IMR-90 (cell line): ENCODE measurements at regions of chr20 and their contacts with region 1.

Region 1: GRCh38 chr20:25987073-25987927 is 290.6 kb upstream of the ZNF337 start:
- DNase-seq: peak; percentile 10
- ATAC-seq: peak; percentile 50
- H3K4me3 ChIP-seq: no peak overlapping the region
- H3K27ac ChIP-seq: no peak overlapping the region
- H3K4me1 ChIP-seq: no peaks in the 10 kb centered on the region
- H3K27me3 ChIP-seq: peaks cover 5% of the 10 kb centered on the region; the same call in 1 of the 2 replicates
- CTCF ChIP-seq: no peak
- POLR2A ChIP-seq: no peak
- RAD21 ChIP-seq: no peak

Region 2: GRCh38 chr20:24918579-24919566 is 1068.4 kb before region 1 on chr20:
- CTCF ChIA-PET with region 1: no interaction called
- POLR2A ChIA-PET with region 1: no interaction called
- dilution Hi-C with region 1: no loop called
- in situ Hi-C with region 1: no loop called
- intact Hi-C with region 1: no loop called
- DNase-seq: no peak
- ATAC-seq: no peak
- H3K4me3 ChIP-seq: no peak overlapping the region
- H3K27ac ChIP-seq: no peak overlapping the region
- H3K4me1 ChIP-seq: no peaks in the 10 kb centered on the region
- H3K27me3 ChIP-seq: peaks cover 20% of the 10 kb centered on the region; the same call in 1 of the 2 replicates
- CTCF ChIP-seq: no peak
- POLR2A ChIP-seq: no peak
- RAD21 ChIP-seq: no peak

Region 3: DNA sequence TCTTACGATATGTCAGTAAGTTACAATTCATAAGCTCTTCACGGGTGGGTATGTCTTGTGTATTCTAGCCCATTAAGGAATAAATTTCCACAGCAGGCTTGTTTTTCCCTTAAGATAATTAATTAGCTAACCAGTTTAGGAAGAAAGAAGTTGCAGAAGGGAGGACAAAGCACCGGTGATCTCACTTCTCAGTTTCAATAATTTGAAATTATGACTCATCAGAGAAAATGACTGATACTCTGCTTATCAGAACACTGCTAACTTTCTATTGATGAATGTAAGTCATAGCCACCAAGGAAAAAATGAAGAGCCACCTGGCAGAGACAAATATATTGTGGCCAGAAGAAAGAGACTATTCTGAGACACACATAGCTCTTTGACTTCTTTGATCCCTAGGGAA is 826.8 kb before region 1 on chr20:
- CTCF ChIA-PET with region 1: no interaction called
- POLR2A ChIA-PET with region 1: no interaction called
- dilution Hi-C with region 1: no loop called
- in situ Hi-C with region 1: loop called (anchors 25 kb)
- intact Hi-C with region 1: no loop called
- DNase-seq: no peak
- ATAC-seq: no peak
- H3K4me3 ChIP-seq: no peak overlapping the region
- H3K27ac ChIP-seq: no peak overlapping the region
- H3K4me1 ChIP-seq: no peaks in the 10 kb centered on the region
- H3K27me3 ChIP-seq: peaks cover 6% of the 10 kb centered on the region
- CTCF ChIP-seq: no peak
- POLR2A ChIP-seq: no peak
- RAD21 ChIP-seq: no peak

Region 4: DNA sequence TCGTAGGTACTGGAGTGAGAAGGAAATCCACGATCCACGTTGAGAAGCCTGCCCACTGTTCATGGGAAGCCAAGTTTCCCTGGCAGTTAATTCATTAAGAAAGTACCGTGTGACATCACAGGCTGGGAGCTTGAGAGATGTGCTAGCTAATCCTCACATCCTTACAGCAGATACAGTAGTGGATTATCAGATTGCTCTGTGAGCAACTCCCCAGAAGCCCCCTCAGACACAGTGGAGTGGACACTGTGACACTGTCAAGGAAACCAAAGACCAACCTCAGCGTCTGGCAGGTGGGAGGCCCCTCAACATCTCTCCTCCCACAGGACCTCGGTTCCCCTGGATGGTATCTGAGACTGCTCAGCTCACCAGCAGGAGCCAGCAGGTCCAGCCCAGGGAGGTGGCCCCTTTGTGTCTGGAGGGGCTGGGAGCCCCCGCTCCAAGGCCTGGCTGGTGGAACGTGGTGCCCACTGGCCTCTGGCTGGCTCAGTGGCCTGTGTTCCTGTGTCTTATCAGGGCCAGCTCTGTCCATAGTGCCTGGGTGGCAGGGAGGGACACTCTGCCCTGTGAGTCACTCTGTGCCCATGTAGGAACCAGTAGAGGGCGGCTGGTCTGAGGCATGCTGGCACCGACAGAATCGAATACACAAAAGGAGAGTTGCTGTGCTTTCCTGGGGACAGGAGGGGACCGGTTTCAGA is 732.2 kb before region 1 on chr20:
- CTCF ChIA-PET with region 1: no interaction called
- POLR2A ChIA-PET with region 1: no interaction called
- dilution Hi-C with region 1: no loop called
- in situ Hi-C with region 1: loop called (anchors 25 kb)
- intact Hi-C with region 1: no loop called
- DNase-seq: no peak
- ATAC-seq: no peak; the same call in 1 of the 2 replicates
- H3K4me3 ChIP-seq: no peak overlapping the region
- H3K27ac ChIP-seq: no peak overlapping the region
- H3K4me1 ChIP-seq: peaks cover 10% of the 10 kb centered on the region
- H3K27me3 ChIP-seq: no peaks in the 10 kb centered on the region
- CTCF ChIP-seq: no peak
- POLR2A ChIP-seq: no peak
- RAD21 ChIP-seq: no peak

Region 5: DNA sequence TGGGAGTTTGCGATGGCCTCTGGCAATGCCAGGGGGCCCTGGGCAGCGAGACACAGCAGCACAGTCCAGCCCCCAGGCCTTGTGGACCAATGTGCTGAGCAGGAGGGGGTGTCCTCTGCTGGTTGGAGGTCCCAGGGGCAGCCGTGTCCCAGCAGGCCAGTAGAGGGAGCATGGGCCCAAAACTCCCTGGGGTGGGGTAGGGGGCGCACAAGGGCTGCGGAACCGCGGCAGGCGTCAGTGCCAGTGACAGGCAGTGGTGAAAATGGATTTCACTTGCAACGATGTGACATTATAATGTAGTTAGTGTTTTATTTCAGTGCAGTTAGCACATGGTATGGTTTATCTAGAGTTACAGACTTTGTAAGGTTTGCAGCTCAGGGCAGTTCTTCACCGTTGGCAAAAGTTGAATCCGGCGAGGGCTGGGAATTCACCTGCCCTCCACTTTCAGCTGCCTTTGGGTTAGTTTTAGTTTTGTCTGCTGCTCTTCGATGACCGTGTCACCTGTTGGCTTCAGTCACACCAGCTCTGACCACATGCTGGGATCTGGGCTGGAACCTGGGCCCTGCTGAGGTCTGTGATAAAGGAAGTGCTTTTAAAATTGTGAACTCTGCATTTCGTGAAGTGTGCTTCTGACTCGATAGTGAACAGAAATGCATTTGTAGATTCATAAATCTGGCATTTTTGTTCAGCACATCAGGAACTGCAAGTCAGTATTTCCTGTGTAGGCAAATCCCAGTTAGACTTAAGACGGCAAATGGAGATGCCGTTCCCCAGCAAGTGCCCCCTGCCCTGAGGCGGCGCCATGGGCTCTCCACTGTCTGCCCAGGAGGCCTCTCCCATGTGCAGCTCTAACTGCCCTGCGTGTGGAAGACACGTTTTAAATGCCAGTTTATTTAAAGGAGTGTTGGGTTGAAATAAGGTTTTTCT is 692.6 kb before region 1 on chr20:
- CTCF ChIA-PET with region 1: no interaction called
- POLR2A ChIA-PET with region 1: no interaction called
- dilution Hi-C with region 1: no loop called
- in situ Hi-C with region 1: no loop called
- intact Hi-C with region 1: no loop called
- DNase-seq: peak; percentile 52
- ATAC-seq: peak; percentile 81
- H3K4me3 ChIP-seq: no peak overlapping the region
- H3K27ac ChIP-seq: no peak overlapping the region
- H3K4me1 ChIP-seq: peaks cover 7% of the 10 kb centered on the region
- H3K27me3 ChIP-seq: no peaks in the 10 kb centered on the region
- CTCF ChIP-seq: peak; percentile 99
- POLR2A ChIP-seq: no peak
- RAD21 ChIP-seq: peak; percentile 85

Region 6: DNA sequence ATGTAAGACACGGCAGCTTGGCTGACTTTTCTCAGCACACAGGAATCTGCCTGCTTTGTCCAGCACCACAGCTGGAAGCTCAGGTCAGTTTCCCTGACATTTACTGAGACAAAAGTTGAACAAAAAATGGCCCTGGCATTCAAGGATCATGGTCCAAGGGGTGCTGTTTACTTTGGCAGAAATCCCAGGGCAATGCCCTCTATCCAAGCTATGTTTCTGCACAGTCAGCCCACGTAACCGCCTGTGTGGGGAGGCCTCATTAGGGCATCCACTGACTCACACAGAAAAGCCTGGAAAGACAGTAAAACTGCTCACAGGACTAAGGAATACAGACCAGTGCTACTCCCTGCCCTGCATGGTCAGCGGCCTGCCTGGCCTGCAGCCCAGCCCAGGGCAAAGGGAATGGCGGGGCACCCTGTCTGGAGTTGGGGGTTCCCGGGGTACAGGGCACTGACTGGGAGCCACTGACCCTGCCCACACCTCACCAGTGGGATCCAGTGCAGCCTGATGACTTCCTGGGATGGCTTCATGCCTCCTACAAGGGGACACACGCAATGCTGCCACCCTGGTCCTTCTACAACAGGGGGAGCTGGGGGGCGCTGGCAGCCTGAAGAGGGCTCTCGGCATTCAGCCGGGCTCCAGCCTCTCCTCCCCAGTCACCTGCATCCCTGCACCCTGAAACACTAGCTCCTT is 479.1 kb before region 1 on chr20:
- CTCF ChIA-PET with region 1: no interaction called
- POLR2A ChIA-PET with region 1: no interaction called
- dilution Hi-C with region 1: no loop called
- in situ Hi-C with region 1: loop called (anchors 25 kb)
- intact Hi-C with region 1: no loop called
- DNase-seq: peak; percentile 85
- ATAC-seq: peak; percentile 97
- H3K4me3 ChIP-seq: no peak overlapping the region
- H3K27ac ChIP-seq: peak overlapping the region; percentile 49
- H3K4me1 ChIP-seq: peaks cover 10% of the 10 kb centered on the region
- H3K27me3 ChIP-seq: no peaks in the 10 kb centered on the region
- CTCF ChIP-seq: no peak
- POLR2A ChIP-seq: no peak
- RAD21 ChIP-seq: no peak

Region 7: GRCh38 chr20:25592135-25592852 is 395.0 kb before region 1 on chr20:
- CTCF ChIA-PET with region 1: no interaction called
- POLR2A ChIA-PET with region 1: no interaction called
- dilution Hi-C with region 1: no loop called
- in situ Hi-C with region 1: no loop called
- intact Hi-C with region 1: no loop called
- DNase-seq: peak; percentile 39
- ATAC-seq: peak; percentile 58
- H3K4me3 ChIP-seq: no peak overlapping the region
- H3K27ac ChIP-seq: peak overlapping the region; percentile 28; the same call in 1 of the 2 replicates
- H3K4me1 ChIP-seq: peaks cover 6% of the 10 kb centered on the region; the same call in 1 of the 2 replicates
- H3K27me3 ChIP-seq: no peaks in the 10 kb centered on the region
- CTCF ChIP-seq: no peak
- POLR2A ChIP-seq: no peak
- RAD21 ChIP-seq: no peak

Region 8: DNA sequence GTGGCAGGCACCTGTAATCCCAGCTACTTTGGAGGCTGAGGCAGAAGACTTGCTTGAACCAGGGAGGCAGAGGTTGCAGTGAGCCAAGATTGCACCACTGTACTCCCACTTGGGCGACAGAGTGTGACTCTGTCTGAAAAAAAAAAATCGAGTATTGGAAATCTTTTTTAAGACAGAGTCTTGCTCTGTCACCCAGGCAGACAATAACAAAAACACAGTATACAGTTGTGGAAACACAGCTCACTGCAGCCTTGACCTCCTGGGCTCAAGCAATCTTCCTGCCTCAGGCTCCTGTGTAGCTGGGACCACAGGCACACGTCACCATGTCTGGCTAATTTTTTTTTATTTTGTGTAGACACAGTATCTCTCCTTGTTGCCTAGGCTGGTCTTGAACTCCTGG is 378.5 kb before region 1 on chr20:
- CTCF ChIA-PET with region 1: no interaction called
- POLR2A ChIA-PET with region 1: no interaction called
- dilution Hi-C with region 1: no loop called
- in situ Hi-C with region 1: no loop called
- intact Hi-C with region 1: no loop called
- DNase-seq: no peak
- ATAC-seq: no peak
- H3K4me3 ChIP-seq: no peak overlapping the region
- H3K27ac ChIP-seq: no peak overlapping the region
- H3K4me1 ChIP-seq: no peaks in the 10 kb centered on the region
- H3K27me3 ChIP-seq: no peaks in the 10 kb centered on the region
- CTCF ChIP-seq: no peak
- POLR2A ChIP-seq: no peak
- RAD21 ChIP-seq: no peak

Region 9: DNA sequence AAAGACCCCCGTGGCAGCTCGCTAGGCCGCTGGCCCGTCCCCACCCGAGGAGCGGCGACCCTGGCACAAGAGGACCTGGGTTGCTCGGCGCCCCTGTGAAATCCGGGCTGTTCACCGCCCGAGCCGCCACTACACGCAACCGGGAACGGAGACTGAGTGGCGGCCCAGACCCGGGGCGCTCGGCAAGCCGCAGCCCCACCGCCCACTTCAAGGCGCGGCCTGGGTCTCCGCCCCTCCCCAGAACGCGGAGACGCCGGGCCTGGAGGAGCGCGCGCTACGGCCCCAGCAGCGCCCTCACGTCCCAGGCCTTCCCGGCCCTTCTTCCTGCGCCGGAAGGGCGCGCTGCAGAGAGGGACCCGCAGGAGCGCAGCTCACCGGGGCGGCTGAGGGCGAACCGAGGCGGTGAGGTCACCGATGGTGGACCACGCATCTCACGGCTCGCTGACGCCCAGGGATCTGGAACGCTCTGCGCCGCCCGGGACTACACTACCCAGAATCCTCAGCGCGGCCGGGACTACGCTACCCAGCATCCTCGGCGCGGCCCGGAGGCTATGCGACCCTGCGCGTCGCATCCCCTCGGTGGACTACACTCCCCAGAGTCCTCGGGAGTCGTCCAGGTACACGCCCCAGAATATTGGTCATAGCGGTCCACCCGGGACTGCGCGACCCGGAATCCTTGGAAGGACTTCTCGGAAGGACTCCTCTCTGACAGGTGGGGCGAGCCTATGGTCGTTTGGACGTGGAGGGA is 290.7 kb before region 1 on chr20 and contains the start of gene ZNF337:
- CTCF ChIA-PET with region 1: no interaction called
- POLR2A ChIA-PET with region 1: no interaction called
- dilution Hi-C with region 1: no loop called
- in situ Hi-C with region 1: loop called (anchors 25 kb)
- intact Hi-C with region 1: no loop called
- DNase-seq: peak; percentile 91
- ATAC-seq: peak; percentile 99
- H3K4me3 ChIP-seq: peak within 1 kb of the TSS; percentile 61
- H3K27ac ChIP-seq: peak within 1 kb of the TSS; percentile 69
- H3K4me1 ChIP-seq: peaks cover 5% of the 10 kb centered on the region
- H3K27me3 ChIP-seq: no peaks in the 10 kb centered on the region
- CTCF ChIP-seq: peak; percentile 35; the same call in 1 of the 2 replicates
- POLR2A ChIP-seq: peak; percentile 86
- RAD21 ChIP-seq: peak; percentile 32
- total RNA-seq, gene ZNF337: 15.8 and 16.5 TPM in 2 replicates

Region 10: DNA sequence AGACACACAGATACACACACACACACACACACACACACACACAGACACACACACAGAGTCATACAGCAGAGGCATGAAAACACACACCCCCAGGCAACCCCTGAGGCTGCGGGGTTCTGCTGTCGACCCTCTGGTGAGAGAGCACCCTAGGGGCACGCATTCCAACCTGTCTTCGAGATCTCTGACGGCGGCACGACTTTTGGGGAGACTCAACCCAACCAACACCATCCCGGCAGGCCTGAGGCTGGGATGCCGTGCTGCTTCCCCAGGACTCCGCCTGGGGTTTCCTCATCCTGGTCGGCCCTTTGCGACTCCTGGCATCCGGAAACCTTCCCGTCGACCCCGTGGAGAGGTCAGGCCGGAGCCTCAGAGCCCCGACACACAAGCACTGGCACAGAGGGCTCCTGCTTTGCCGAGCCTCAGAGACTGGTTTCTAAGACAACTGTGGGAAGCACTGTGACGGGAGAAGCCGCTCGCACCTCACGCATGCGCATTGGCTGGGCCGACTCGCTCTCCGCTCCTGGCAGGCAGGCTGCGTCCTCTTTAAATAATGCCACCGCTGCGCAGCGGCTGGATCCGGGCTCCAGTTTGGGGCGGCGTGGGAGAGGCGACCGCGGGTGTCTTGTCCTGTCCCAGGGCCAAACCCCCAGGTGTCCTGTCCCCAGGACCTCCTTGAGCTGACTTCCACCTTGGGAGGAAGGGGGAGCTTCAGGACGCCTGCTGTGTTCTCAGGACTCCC is 121.8 kb before region 1 on chr20:
- CTCF ChIA-PET with region 1: no interaction called
- POLR2A ChIA-PET with region 1: no interaction called
- dilution Hi-C with region 1: no loop called
- in situ Hi-C with region 1: loop called (anchors 25 kb)
- intact Hi-C with region 1: no loop called
- DNase-seq: peak; percentile 41
- ATAC-seq: peak; percentile 52; the same call in 1 of the 2 replicates
- H3K4me3 ChIP-seq: no peak overlapping the region
- H3K27ac ChIP-seq: no peak overlapping the region
- H3K4me1 ChIP-seq: no peaks in the 10 kb centered on the region
- H3K27me3 ChIP-seq: peaks cover 18% of the 10 kb centered on the region
- CTCF ChIP-seq: no peak
- POLR2A ChIP-seq: no peak
- RAD21 ChIP-seq: no peak